Breast epithelium (tissue), 4 donors: ENCODE measurements at regions of chr2 and their contacts with region 1.

Region 1: GRCh38 chr2:37550190-37550589 is 121.3 kb downstream of the CDC42EP3 start:
- DNase-seq: no peak
- H3K4me3 ChIP-seq: no peak overlapping the region
- H3K27ac ChIP-seq: no peak overlapping the region
- H3K4me1 ChIP-seq: peaks cover 0 to 3% of the 10 kb centered on the region in 2 donors
- H3K27me3 ChIP-seq: no peaks in the 10 kb centered on the region
- CTCF ChIP-seq: no peak
- POLR2A ChIP-seq: no peak

Region 2: GRCh38 chr2:37196320-37197195 is 353.6 kb before region 1 on chr2 and contains the start of gene CEBPZOS:
- intact Hi-C with region 1: no loop called
- DNase-seq: peak; percentile 76 to 81
- H3K4me3 ChIP-seq: peak within 1 kb of the TSS; percentile 63 to 91 (median 85)
- H3K27ac ChIP-seq: peak within 1 kb of the TSS; percentile 88 to 94
- H3K4me1 ChIP-seq: no peaks in the 10 kb centered on the region
- H3K27me3 ChIP-seq: no peaks in the 10 kb centered on the region
- CTCF ChIP-seq: peak in 1 of 3 donors; percentile 10
- POLR2A ChIP-seq: peak; percentile 63
- total RNA-seq, gene CEBPZOS: 19.4 to 43.0 (median 21.6) TPM

Region 3: DNA sequence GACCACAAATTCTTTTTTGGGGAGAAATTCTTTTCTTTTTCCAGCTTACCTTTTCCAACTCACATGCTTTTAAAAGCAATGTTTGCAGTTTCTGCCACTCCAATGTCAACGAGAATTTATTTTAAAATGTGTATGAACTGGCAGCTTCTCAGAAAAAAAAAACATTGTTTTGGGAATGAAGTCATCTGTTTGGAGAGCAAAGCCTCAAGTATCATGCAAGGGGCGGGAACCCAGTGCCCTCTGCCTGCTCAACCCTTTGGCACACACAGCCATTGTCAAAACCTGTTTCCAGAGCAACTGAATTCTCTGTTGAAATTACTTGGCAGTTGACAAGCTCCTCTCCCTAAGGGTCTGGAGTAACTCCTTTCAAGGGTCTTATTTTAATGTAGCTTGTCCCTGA is 77.2 kb before region 1 on chr2:
- intact Hi-C with region 1: no loop called
- DNase-seq: peak in 1 of 2 donors; percentile 29
- H3K4me3 ChIP-seq: no peak overlapping the region
- H3K27ac ChIP-seq: peak overlapping the region in 1 of 2 donors; percentile 26
- H3K4me1 ChIP-seq: no peaks in the 10 kb centered on the region
- H3K27me3 ChIP-seq: no peaks in the 10 kb centered on the region
- CTCF ChIP-seq: no peak
- POLR2A ChIP-seq: no peak

Region 4: DNA sequence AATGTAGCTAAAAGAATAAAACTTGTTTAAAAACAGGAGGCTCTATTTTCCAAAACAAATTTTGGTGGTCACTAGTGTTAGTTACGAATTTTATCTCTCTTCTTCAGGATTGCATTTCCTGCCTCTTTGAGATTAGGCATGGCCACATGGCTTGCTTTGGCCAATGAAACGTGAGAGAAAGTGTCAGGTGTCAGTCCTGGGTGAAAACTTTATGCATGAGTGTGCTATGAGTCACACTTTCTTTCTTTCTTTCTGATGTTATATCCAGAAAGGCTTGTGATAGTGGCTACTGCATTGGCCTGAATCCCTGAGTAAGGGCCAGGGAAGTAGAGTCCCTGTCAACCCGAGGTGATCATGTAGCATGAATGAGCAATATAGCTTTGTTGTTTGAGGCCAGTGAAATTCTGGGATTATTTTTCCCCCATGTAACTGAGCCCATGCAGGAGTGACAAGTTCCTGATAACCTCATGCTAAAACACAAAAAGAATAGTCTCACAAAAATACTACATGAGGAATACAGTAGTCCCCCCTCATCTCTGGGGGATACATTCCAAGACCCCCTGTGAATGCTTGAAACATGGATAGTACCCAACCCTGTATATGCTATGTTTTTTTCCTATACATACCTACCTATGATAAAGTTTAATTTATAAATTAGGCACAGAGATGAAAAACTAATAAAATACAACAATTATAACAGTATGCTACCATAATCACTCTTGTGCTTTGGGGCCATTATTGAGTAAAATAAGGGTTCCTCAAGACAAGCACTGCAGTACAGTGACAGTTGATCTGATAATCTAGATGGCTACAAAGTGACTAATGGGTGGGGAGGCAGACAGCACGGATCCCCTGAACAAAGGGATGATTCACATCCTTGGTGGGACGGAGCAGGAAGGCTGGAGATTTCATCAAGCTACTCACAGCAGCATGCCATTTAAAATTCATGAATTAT is 11.7 kb after region 1 on chr2:
- intact Hi-C with region 1: loop called (anchors 1 kb)
- DNase-seq: no peak
- H3K4me3 ChIP-seq: no peak overlapping the region
- H3K27ac ChIP-seq: no peak overlapping the region
- H3K4me1 ChIP-seq: no peaks in the 10 kb centered on the region
- H3K27me3 ChIP-seq: no peaks in the 10 kb centered on the region
- CTCF ChIP-seq: no peak
- POLR2A ChIP-seq: no peak

Region 5: GRCh38 chr2:38438883-38439612 is 888.9 kb after region 1 on chr2:
- intact Hi-C with region 1: no loop called
- DNase-seq: no peak
- H3K4me3 ChIP-seq: no peak overlapping the region
- H3K27ac ChIP-seq: peak overlapping the region; percentile 86 to 89
- H3K4me1 ChIP-seq: peaks cover 0 to 25% of the 10 kb centered on the region in 2 donors
- H3K27me3 ChIP-seq: no peaks in the 10 kb centered on the region
- CTCF ChIP-seq: no peak
- POLR2A ChIP-seq: no peak

Region 6: DNA sequence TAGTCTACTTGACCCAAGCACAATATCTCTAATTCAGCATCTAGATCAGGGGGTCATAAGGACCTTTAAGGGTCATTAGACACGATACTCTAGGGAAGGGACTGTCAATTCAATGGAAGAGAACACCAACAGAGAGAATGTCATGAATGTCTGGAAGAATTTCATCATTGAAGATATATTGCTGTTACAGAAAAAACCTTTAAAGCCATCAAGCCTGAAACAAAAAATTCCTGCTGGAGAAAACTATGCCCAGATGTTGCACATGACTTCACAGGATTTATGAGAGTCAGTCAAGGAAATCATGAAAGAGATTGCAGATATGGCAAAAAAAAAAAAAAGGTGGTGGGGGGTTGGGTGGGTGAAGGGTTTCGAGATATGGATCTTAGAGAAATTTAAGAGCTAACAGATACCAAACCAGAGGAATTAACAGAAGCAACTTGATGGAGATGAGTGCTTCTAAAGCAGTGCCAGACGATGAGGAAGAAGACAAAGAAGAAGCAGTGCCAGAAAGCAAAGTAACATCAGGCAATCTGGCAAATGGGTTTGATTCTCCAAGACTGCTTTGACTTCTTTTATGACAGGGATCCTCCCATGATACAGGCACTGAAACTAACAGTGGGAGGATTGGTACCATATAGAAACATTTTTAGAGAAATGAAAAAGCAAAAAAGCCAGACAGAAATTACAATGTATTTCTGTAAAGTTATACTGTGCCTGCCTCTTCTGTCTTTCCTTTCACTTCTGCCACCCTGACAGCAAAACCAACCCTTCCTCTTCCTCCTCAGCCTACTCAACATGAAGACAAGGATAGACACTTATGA is 1858.3 kb after region 1 on chr2:
- intact Hi-C with region 1: no loop called
- DNase-seq: no peak
- H3K4me3 ChIP-seq: no peak overlapping the region
- H3K27ac ChIP-seq: no peak overlapping the region
- H3K4me1 ChIP-seq: peaks cover 0 to 6% of the 10 kb centered on the region in 2 donors
- H3K27me3 ChIP-seq: no peaks in the 10 kb centered on the region
- CTCF ChIP-seq: no peak
- POLR2A ChIP-seq: no peak